Sigmoid colon (tissue), 7 donors: ENCODE measurements at regions of chr11 and their contacts with region 1.

Region 1: GRCh38 chr11:46845740-46846509 is at the start of gene CKAP5:
- DNase-seq: peak; percentile 95
- H3K4me3 ChIP-seq: peak within 1 kb of the TSS; percentile 75 to 96 (median 84)
- H3K27ac ChIP-seq: peak within 1 kb of the TSS; percentile 83 to 89 (median 87)
- H3K4me1 ChIP-seq: peaks cover 0 to 25% (median 22%) of the 10 kb centered on the region in 4 donors
- H3K27me3 ChIP-seq: no peaks in the 10 kb centered on the region
- CTCF ChIP-seq: no peak
- EP300 ChIP-seq: no peak
- POLR2A ChIP-seq: peak; percentile 56 to 58
- total RNA-seq, gene CKAP5: 27.3 to 38.8 (median 35.7) TPM

Region 2: DNA sequence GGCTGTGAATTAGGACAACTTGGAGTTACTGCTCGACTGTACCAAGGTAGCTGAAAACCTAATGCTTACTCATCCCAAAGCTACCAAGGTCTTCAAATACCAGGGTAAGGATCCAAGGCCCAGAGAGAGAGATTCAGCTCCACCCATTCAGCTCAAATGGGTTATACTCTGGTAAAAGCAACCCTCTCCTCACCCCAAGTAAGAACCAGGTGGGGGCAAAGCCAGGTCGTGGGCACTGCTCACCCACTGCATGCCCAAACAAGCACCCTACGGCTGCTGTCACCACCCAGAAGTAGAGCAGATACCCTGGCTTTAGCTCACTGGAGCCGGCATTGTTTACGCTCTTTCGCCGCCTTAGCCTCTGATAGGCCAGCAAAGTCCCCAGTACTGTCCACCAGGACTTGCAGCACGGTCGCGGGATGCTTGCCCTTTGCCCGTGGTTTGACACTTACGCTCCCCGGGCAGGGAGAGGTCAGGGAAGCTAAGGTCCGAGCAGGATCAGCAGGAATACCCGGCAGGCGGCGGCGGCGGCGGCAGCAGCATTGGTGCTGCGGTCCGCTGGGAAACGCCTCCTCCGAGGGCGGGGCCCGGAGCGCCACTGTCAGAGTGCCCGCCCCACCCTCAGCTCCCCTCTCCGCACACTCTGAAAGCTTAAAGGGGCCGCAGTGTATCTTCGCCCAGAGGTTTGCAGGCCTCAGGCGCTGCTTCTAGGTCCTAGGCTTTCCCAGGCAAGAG is 19.4 kb before region 1 on chr11:
- intact Hi-C with region 1: loop called (anchors 1 kb)
- DNase-seq: peak; percentile 91
- H3K4me3 ChIP-seq: peak overlapping the region; percentile 47 to 69 (median 62)
- H3K27ac ChIP-seq: peak overlapping the region; percentile 76 to 86 (median 82)
- H3K4me1 ChIP-seq: peaks cover 0 to 41% (median 20%) of the 10 kb centered on the region in 4 donors
- H3K27me3 ChIP-seq: no peaks in the 10 kb centered on the region
- CTCF ChIP-seq: no peak
- EP300 ChIP-seq: no peak
- POLR2A ChIP-seq: no peak